ENCODE measurements at regions of chr2 and their contacts with region 1.

Region 1: GRCh38 chr2:28392297-28393113 is at the start of gene FOSL2:
- DNase-seq: peak; percentile 98 to 99
- ATAC-seq: peak; percentile 49 to 52
- H3K4me3 ChIP-seq: peak within 1 kb of the TSS; percentile 76 to 97 (median 88)
- H3K27ac ChIP-seq: peak within 1 kb of the TSS; percentile 98 to 100 (median 99)
- H3K4me1 ChIP-seq: peaks cover 15 to 17% of the 10 kb centered on the region in 2 donors
- H3K27me3 ChIP-seq: no peaks in the 10 kb centered on the region
- CTCF ChIP-seq: peak in 1 of 5 experiments; percentile 13
- POLR2A ChIP-seq: peak; percentile 99
- total RNA-seq, gene FOSL2: 193 to 214 (median 210) TPM

Region 2: GRCh38 chr2:27703638-27704341 is 688.7 kb before region 1 on chr2:
- in situ Hi-C with region 1: loop called in 2 of 4 experiments (anchors 5 kb)
- intact Hi-C with region 1: loop called (anchors 2 kb)
- DNase-seq: peak; percentile 74 to 81
- ATAC-seq: peak; percentile 30 to 40
- H3K4me3 ChIP-seq: no peak overlapping the region
- H3K27ac ChIP-seq: peak overlapping the region; percentile 84 to 96 (median 94)
- H3K4me1 ChIP-seq: peaks cover 39 to 62% of the 10 kb centered on the region in 2 donors
- H3K27me3 ChIP-seq: no peaks in the 10 kb centered on the region
- CTCF ChIP-seq: peak; percentile 88 to 96 (median 94)
- POLR2A ChIP-seq: no peak

Region 3: DNA sequence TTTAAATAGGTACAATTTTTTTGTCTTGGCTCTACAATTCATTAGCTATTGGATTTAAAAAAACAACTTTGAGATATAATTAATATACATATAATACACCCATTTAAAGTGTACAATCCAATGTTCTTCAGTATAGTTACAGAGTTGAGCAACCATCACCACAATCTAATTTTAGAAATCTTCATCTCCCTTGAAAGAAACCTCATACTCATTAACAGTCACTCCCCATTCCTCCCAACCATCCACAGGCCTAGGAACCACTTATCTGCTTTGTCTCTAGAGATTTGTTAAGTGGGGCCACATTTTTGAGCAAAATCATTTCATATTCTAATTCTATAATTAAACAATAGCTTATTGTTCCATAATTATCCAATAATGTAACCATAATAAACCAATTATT is 588.4 kb before region 1 on chr2:
- in situ Hi-C with region 1: no loop called
- intact Hi-C with region 1: loop called (anchors 5 kb)
- DNase-seq: no peak
- ATAC-seq: peak; percentile 71 to 86
- H3K4me3 ChIP-seq: no peak overlapping the region
- H3K27ac ChIP-seq: peak overlapping the region in 3 of 4 donors; percentile 17 to 65 (median 35)
- H3K4me1 ChIP-seq: peaks cover 29 to 49% of the 10 kb centered on the region in 2 donors
- H3K27me3 ChIP-seq: no peaks in the 10 kb centered on the region
- CTCF ChIP-seq: no peak
- POLR2A ChIP-seq: no peak

Region 4: GRCh38 chr2:28164280-28164801 is 228.2 kb before region 1 on chr2:
- in situ Hi-C with region 1: loop called in 1 of 4 experiments (anchors 10 kb)
- intact Hi-C with region 1: loop called (anchors 1 kb)
- DNase-seq: peak; percentile 68 to 88
- ATAC-seq: peak; percentile 81 to 86
- H3K4me3 ChIP-seq: peak overlapping the region in 3 of 4 donors; percentile 17 to 25 (median 24)
- H3K27ac ChIP-seq: peak overlapping the region; percentile 89 to 96 (median 92)
- H3K4me1 ChIP-seq: peaks cover 36 to 61% of the 10 kb centered on the region in 2 donors
- H3K27me3 ChIP-seq: no peaks in the 10 kb centered on the region
- CTCF ChIP-seq: no peak
- POLR2A ChIP-seq: peak in 1 of 2 donors; percentile 50

Region 5: GRCh38 chr2:28269019-28269784 is 123.3 kb before region 1 on chr2:
- in situ Hi-C with region 1: no loop called
- intact Hi-C with region 1: loop called (anchors 2 kb)
- DNase-seq: peak in 1 of 2 donors; percentile 15
- ATAC-seq: peak; percentile 75 to 77
- H3K4me3 ChIP-seq: no peak overlapping the region
- H3K27ac ChIP-seq: peak overlapping the region; percentile 47 to 72 (median 54)
- H3K4me1 ChIP-seq: peaks cover 12 to 42% of the 10 kb centered on the region in 2 donors
- H3K27me3 ChIP-seq: no peaks in the 10 kb centered on the region
- CTCF ChIP-seq: no peak
- POLR2A ChIP-seq: no peak

Region 6: GRCh38 chr2:28342081-28342967 is 50.2 kb before region 1 on chr2:
- in situ Hi-C with region 1: no loop called
- intact Hi-C with region 1: loop called (anchors 2 kb)
- DNase-seq: peak; percentile 56 to 72
- ATAC-seq: peak; percentile 54 to 60
- H3K4me3 ChIP-seq: peak overlapping the region; percentile 26 to 37 (median 32)
- H3K27ac ChIP-seq: peak overlapping the region; percentile 85 to 89 (median 87)
- H3K4me1 ChIP-seq: peaks cover 73 to 82% of the 10 kb centered on the region in 2 donors
- H3K27me3 ChIP-seq: no peaks in the 10 kb centered on the region
- CTCF ChIP-seq: no peak
- POLR2A ChIP-seq: peak; percentile 52 to 69

Region 7: GRCh38 chr2:28452534-28453081 is 60.1 kb after region 1 on chr2:
- in situ Hi-C with region 1: no loop called
- intact Hi-C with region 1: no loop called
- DNase-seq: peak; percentile 54 to 65
- ATAC-seq: peak; percentile 60 to 82
- H3K4me3 ChIP-seq: no peak overlapping the region
- H3K27ac ChIP-seq: no peak overlapping the region
- H3K4me1 ChIP-seq: no peaks in the 10 kb centered on the region
- H3K27me3 ChIP-seq: no peaks in the 10 kb centered on the region
- CTCF ChIP-seq: peak; percentile 92 to 97 (median 96)
- POLR2A ChIP-seq: no peak

Region 8: DNA sequence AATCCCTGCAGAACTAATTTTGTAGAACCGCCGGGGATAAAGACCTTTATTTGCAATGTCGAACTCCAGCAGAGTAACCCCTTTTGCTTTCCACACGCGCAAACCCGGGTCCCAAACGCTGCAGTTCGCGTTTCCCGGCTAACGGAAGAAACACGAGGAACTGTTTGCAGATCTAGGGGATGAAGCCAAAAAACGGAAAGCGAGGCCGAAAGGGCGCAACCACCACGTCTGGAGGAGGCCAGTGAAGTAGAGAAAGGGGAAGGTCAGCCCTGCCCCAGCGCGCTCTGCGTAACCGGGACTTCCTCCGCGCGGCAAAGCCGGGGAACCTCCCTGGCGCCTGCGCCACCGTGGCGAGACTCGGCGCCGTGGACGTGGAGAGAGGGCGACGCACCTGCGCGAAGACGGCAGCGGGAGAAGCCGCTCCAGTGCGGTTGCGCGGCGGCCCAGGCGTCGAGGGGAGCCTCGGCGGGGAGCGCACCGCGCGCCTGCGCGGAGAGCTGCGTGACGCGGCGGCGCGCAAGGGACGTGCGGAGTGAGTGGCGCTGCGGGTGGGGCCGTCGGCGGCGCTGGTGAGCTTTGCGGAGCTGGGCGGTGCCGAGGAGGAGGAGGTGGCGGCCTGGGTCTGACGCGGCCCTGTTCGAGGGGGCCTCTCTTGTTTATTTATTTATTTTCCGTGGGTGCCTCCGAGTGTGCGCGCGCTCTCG is 358.9 kb after region 1 on chr2 and contains the start of gene PPP1CB:
- in situ Hi-C with region 1: no loop called
- intact Hi-C with region 1: loop called (anchors 5 kb)
- DNase-seq: peak; percentile 96 to 97
- ATAC-seq: peak; percentile 79
- H3K4me3 ChIP-seq: peak within 1 kb of the TSS; percentile 74 to 90 (median 88)
- H3K27ac ChIP-seq: peak within 1 kb of the TSS; percentile 96 to 99 (median 97)
- H3K4me1 ChIP-seq: peaks cover 49 to 57% of the 10 kb centered on the region in 2 donors
- H3K27me3 ChIP-seq: no peaks in the 10 kb centered on the region
- CTCF ChIP-seq: peak in 4 of 5 experiments; percentile 31 to 60 (median 39)
- POLR2A ChIP-seq: peak; percentile 90 to 92
- total RNA-seq, gene PPP1CB: 230 to 419 (median 317) TPM

Measured in gastrocnemius medialis (tissue), 4 donors.